HepG2 (cell line): ENCODE measurements at regions of chr17 and their contacts with region 1.

Region 1: GRCh38 chr17:22454070-22454999 is 762.0 kb downstream of the KCNJ18 start:
- DNase-seq: no peak
- ATAC-seq: no peak
- H3K4me3 ChIP-seq: no peak overlapping the region
- H3K27ac ChIP-seq: no peak overlapping the region
- H3K4me1 ChIP-seq: no peaks in the 10 kb centered on the region
- H3K27me3 ChIP-seq: no peaks in the 10 kb centered on the region; a peak in 1 of 5 replicates
- CTCF ChIP-seq: no peak
- EP300 ChIP-seq: no peak
- POLR2A ChIP-seq: no peak
- RAD21 ChIP-seq: no peak

Region 2: GRCh38 chr17:22142091-22142490 is 312.2 kb before region 1 on chr17:
- CTCF ChIA-PET with region 1: no interaction called
- POLR2A ChIA-PET with region 1: no interaction called
- in situ Hi-C with region 1: no loop called
- intact Hi-C with region 1: no loop called
- DNase-seq: no peak
- ATAC-seq: no peak
- H3K4me3 ChIP-seq: no peak overlapping the region
- H3K27ac ChIP-seq: no peak overlapping the region
- H3K4me1 ChIP-seq: no peaks in the 10 kb centered on the region
- H3K27me3 ChIP-seq: no peaks in the 10 kb centered on the region
- CTCF ChIP-seq: no peak
- EP300 ChIP-seq: no peak
- POLR2A ChIP-seq: no peak
- RAD21 ChIP-seq: no peak

Region 3: DNA sequence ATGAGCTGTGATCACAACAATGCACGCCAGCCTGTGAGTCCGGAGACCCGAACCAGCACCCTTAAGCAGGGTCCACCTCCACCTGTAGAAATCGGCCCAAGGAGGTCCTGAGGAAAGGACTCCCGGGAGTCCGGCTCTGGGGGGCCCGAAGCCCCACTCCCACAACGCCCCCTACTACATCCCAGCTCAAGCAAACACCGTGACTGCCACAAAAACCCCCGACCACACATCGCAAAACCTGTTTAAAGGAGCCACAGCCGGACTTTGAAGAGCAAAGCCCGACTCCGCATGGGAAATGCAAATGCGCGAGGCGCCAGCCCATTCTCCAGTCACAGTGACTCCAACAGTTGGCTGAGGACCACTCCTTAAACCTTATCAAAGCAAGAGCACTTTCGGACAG is 79.6 kb before region 1 on chr17:
- CTCF ChIA-PET with region 1: no interaction called
- POLR2A ChIA-PET with region 1: no interaction called
- in situ Hi-C with region 1: loop called (anchors 25 kb)
- intact Hi-C with region 1: no loop called
- DNase-seq: no peak
- ATAC-seq: no peak
- H3K4me3 ChIP-seq: no peak overlapping the region
- H3K27ac ChIP-seq: no peak overlapping the region
- H3K4me1 ChIP-seq: no peaks in the 10 kb centered on the region
- H3K27me3 ChIP-seq: no peaks in the 10 kb centered on the region
- CTCF ChIP-seq: no peak
- EP300 ChIP-seq: no peak
- POLR2A ChIP-seq: no peak
- RAD21 ChIP-seq: no peak

Region 4: DNA sequence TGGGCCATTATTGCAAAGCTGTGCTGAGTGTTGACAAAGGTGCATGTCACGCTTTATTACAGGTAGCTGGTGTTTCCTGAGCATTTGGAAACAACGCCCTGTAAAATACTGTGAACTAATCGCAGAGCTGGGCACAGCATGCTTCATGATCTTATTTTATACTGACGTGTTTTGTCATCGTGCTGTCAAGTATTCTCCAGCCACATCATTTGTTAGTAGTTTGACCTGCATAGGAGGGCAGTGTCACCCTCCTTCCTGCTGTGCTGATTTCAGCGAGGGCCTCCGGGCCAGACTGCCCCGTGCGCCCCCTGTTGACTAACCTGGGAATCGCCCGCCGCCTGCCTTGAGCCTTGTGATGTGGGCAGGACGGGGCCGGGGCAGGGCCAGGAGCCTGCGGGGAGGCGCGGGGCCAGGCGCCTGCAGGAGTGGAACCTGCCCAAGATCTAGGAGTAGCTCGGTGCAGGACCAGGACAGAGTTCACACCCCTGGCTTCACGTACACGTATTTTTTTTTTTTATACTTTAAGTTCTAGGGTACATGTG is 58.7 kb after region 1 on chr17:
- CTCF ChIA-PET with region 1: no interaction called
- POLR2A ChIA-PET with region 1: no interaction called
- in situ Hi-C with region 1: no loop called
- intact Hi-C with region 1: no loop called
- DNase-seq: no peak
- ATAC-seq: peak; percentile 85
- H3K4me3 ChIP-seq: no peak overlapping the region
- H3K27ac ChIP-seq: no peak overlapping the region
- H3K4me1 ChIP-seq: no peaks in the 10 kb centered on the region
- H3K27me3 ChIP-seq: no peaks in the 10 kb centered on the region
- CTCF ChIP-seq: peak; percentile 69
- EP300 ChIP-seq: no peak
- POLR2A ChIP-seq: no peak
- RAD21 ChIP-seq: no peak

Region 5: DNA sequence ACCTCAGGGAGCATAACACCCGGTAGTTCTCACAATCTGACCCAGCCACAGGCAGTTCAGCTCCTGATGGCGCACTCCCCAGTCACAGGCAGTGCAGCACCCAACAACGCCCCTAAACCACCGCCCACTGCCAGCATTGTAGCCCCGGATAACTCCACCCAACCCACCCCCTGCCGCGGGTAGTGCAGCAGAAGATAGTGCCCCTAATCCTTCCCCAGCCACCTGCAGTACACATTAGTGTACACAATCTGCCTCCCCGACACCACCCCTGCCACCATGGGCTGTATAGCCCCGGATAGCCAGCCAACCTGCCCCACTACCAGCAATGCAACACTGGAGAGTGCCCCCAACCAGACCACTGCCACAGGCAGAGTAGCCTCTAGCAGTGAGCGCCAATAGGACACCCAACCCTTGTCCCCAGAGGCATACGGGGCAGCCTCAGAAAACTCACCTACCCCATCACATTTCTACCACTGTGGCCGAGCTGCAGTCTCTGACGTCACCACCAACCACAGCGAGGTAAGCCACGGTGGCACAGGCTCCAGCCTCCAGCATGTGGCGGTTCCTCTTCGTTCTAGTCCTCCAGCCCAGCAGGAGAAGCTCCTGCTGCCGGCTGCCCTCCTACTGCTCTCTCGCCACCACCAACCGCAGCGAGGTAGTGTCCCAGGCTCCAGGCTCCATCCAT is 115.3 kb after region 1 on chr17:
- CTCF ChIA-PET with region 1: no interaction called
- POLR2A ChIA-PET with region 1: no interaction called
- in situ Hi-C with region 1: loop called (anchors 25 kb)
- intact Hi-C with region 1: no loop called
- DNase-seq: no peak
- ATAC-seq: no peak
- H3K4me3 ChIP-seq: no peak overlapping the region
- H3K27ac ChIP-seq: no peak overlapping the region
- H3K4me1 ChIP-seq: no peaks in the 10 kb centered on the region
- H3K27me3 ChIP-seq: no peaks in the 10 kb centered on the region
- CTCF ChIP-seq: no peak
- EP300 ChIP-seq: no peak
- POLR2A ChIP-seq: no peak
- RAD21 ChIP-seq: no peak